Thyroid gland (tissue), 4 donors: ENCODE measurements at regions of chr1 and their contacts with region 1.

Region 1: DNA sequence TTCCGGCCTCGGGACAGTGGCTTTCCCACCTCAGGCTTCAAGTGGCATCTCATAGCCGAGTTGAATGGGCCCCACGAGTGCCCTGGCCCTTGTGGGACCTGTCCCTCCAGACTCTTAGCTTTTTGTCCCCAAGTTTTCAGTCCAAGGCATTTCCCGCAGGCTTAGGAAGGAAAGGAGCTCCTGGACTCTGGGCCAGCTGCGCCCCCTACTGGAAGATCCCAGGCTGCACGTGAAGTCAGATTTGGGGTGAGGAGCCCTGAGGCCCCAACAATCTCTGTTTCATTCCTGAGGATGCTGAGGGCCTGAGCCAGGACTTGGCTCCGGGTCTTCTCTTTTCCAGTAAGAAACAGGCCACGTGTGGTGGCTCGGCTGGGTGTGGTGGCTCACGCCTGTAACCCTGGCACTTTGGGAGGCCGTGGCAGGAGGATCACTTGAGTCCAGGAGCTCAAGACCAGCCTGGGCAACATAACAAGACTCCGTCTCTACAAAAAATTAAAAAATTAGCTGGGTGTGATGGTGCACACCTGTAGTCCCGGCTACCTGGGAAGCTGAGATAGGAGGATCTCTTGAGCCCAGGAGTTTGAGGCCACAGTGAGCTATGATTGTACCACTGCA is 67.4 kb downstream of the ARHGEF10L start:
- DNase-seq: peak; percentile 67 to 77
- H3K4me3 ChIP-seq: no peak overlapping the region
- H3K27ac ChIP-seq: peak overlapping the region; percentile 23 to 71 (median 68)
- H3K4me1 ChIP-seq: peaks cover 12 to 17% of the 10 kb centered on the region in 2 donors
- H3K27me3 ChIP-seq: no peaks in the 10 kb centered on the region
- CTCF ChIP-seq: peak; percentile 75 to 91 (median 86)
- POLR2A ChIP-seq: no peak

Region 2: GRCh38 chr1:17419626-17420328 is 187.2 kb before region 1 on chr1:
- intact Hi-C with region 1: loop called (anchors 10 kb)
- DNase-seq: peak; percentile 56
- H3K4me3 ChIP-seq: no peak overlapping the region
- H3K27ac ChIP-seq: no peak overlapping the region
- H3K4me1 ChIP-seq: no peaks in the 10 kb centered on the region
- H3K27me3 ChIP-seq: no peaks in the 10 kb centered on the region
- CTCF ChIP-seq: peak; percentile 64 to 97 (median 92)
- POLR2A ChIP-seq: no peak

Region 3: DNA sequence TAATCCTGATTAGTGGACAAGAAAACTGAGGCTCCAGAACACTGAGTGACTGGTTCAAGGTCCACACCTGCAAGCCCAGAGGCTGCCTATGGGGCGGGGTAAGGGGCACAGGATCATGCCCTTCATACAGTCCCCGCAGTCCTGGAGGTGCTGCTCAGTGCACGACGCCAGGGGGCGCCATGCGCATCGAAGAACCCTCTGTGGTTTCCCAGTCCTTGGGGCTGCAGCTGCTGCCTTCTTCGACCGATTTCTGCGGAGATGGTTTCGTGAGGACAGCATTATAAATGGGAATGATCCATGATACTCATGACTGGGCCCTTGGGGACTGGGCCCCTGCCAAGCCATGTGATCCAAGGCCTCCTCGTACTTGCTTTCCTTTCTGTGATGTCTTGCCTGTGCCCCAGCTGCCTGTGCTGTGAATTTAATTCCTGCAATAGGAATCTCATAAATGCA is 104.6 kb before region 1 on chr1:
- intact Hi-C with region 1: loop called (anchors 2 kb)
- DNase-seq: peak; percentile 86 to 90
- H3K4me3 ChIP-seq: no peak overlapping the region
- H3K27ac ChIP-seq: peak overlapping the region in 1 of 3 donors; percentile 18
- H3K4me1 ChIP-seq: peaks cover 4 to 10% of the 10 kb centered on the region in 2 donors
- H3K27me3 ChIP-seq: no peaks in the 10 kb centered on the region
- CTCF ChIP-seq: peak; percentile 87 to 93 (median 88)
- POLR2A ChIP-seq: no peak

Region 4: DNA sequence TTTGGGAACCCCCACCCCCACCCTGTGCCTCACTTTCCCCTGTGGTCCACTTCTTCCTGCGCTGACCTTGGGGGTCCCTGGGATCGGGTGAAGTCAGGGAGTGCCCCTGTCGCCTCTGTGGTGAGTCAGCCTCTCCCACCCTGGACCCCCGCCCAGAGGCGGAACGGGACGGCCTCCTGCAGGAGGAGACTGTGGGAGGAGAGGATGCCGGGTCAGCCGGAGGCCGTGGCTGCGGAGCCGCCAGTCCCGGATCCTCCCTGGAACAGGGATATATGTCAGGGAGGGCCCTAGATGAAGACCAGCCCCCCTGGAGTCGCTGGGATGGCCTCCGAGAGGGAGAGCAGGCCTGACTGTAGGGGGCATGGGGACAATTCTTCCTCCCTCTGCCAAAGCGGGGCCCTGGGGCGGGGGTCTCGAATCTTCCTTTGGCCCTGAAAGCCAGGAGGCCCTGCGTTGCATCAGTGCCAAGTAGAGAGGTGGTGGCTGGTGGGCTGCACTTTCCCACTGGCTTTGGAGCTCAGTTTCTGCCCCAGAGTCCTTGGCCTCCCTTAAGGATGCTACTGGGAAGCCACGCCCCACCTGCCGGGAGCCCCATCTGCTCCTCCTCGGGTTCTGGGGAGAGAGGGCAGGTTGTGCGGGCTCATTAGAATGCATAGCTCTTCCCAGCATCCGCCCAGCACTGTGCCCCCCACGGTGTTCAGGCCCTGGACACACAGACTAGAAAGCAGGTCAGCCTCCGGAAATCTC is 66.5 kb before region 1 on chr1:
- intact Hi-C with region 1: no loop called
- DNase-seq: peak; percentile 42
- H3K4me3 ChIP-seq: peak overlapping the region; percentile 49 to 72 (median 58)
- H3K27ac ChIP-seq: peak overlapping the region; percentile 56 to 83 (median 77)
- H3K4me1 ChIP-seq: peaks cover 17 to 34% of the 10 kb centered on the region in 2 donors
- H3K27me3 ChIP-seq: no peaks in the 10 kb centered on the region
- CTCF ChIP-seq: no peak
- POLR2A ChIP-seq: no peak